CD4-positive, alpha-beta memory T cell (primary cell): ENCODE measurements at regions of chr10 and their contacts with region 1.

Region 1: DNA sequence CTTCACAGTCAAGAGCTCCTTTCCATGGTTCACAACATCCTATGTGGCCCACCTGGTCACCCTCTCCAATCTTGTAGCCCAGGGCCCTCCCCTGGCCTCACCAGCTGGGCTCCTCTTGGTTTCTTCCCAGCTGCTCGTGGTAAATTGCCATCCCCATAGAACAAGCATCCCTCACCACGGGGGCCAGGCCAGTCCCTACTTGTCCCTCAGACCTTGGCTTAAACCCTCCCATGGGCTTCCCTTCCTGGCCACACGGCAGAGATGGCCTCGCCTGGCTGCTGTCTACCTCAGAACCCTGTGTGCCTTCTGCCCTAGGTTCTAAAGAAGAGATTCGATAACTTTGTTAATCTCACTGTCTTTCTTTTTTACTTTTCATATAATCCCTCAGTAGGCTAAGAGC is 153.3 kb upstream of the TCERG1L start:
- DNase-seq: no peak
- H3K4me3 ChIP-seq: no peak overlapping the region
- H3K4me3 Mint-ChIP-seq: no peak overlapping the region
- H3K27ac ChIP-seq: no peak overlapping the region
- H3K27ac Mint-ChIP-seq: no peak overlapping the region
- H3K4me1 ChIP-seq: no peaks in the 10 kb centered on the region
- H3K4me1 Mint-ChIP-seq: no peaks in the 10 kb centered on the region
- H3K27me3 ChIP-seq: no peaks in the 10 kb centered on the region
- H3K27me3 Mint-ChIP-seq: peaks cover 0 to 9% of the 10 kb centered on the region in 2 donors

Region 2: DNA sequence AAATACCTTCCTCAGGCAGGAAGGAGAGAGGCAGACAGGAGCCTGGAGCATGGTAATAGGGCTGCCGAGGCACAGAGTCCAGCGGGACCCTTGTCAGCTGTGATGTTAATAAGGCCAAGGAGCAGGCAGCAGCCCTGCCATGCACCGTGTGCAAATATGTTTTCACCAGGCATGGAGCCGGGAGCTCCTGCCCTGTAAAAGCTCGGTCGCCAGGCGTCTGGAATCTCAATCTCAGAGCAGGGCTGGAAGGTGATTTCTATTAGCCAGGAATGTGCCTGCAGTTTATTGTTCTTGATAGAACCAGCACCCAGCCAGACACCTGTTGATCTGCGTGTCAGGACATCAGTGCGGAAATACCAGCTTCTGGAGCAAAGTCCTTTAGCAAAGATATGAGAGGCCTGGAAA is 858.8 kb before region 1 on chr10:
- CTCF ChIA-PET with region 1: no interaction called
- POLR2A ChIA-PET with region 1: no interaction called
- intact Hi-C with region 1: no loop called
- DNase-seq: no peak
- H3K4me3 ChIP-seq: no peak overlapping the region
- H3K4me3 Mint-ChIP-seq: no peak overlapping the region
- H3K27ac ChIP-seq: no peak overlapping the region
- H3K27ac Mint-ChIP-seq: no peak overlapping the region
- H3K4me1 ChIP-seq: no peaks in the 10 kb centered on the region
- H3K4me1 Mint-ChIP-seq: no peaks in the 10 kb centered on the region
- H3K27me3 ChIP-seq: no peaks in the 10 kb centered on the region
- H3K27me3 Mint-ChIP-seq: no peaks in the 10 kb centered on the region

Region 3: GRCh38 chr10:131402771-131403650 is 61.8 kb before region 1 on chr10:
- CTCF ChIA-PET with region 1: no interaction called
- POLR2A ChIA-PET with region 1: no interaction called
- intact Hi-C with region 1: no loop called
- DNase-seq: no peak
- H3K4me3 ChIP-seq: no peak overlapping the region
- H3K4me3 Mint-ChIP-seq: no peak overlapping the region
- H3K27ac ChIP-seq: no peak overlapping the region
- H3K27ac Mint-ChIP-seq: no peak overlapping the region
- H3K4me1 ChIP-seq: no peaks in the 10 kb centered on the region
- H3K4me1 Mint-ChIP-seq: no peaks in the 10 kb centered on the region
- H3K27me3 ChIP-seq: no peaks in the 10 kb centered on the region
- H3K27me3 Mint-ChIP-seq: no peaks in the 10 kb centered on the region

Region 4: DNA sequence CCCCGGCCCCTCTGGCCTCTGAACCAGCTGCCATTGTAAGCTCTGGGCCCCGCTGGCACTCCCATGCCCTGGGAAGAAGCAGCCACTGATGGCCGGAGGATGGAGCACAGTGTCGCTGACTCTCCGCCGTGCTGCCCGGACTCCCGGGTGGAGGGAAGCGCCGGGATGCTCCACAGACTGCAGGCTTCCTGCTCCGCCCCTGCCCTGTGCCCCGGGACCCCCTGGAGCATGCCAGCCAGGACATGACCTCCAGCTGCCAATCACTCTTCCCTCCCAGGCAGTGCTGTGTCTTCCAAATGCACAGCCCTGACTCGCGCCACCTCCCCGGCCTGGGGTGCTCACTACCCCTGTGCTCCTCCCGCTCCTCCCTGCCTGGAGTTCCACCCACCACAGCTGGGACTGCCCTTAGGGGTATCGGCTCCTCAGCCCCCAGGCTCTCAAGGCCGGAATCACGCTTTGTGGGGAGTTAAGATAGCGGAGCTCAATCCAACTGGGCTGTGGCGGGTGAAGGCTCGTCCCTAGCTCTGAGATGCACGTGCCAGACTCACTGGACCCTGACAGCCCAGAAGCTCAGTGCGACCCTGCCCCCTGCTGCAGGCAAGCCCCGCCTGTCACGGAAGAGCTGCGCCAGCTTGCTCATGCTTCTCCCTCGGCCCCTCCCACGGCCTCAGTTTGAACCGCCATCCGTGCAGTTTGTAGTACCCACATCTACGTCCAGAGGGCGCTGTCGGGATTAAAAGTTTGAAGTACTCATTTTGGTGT is 11.0 kb before region 1 on chr10:
- CTCF ChIA-PET with region 1: interaction called, 12 read pairs
- POLR2A ChIA-PET with region 1: no interaction called
- intact Hi-C with region 1: no loop called
- DNase-seq: peak in 4 of 5 donors; percentile 18 to 30 (median 25)
- H3K4me3 ChIP-seq: no peak overlapping the region
- H3K4me3 Mint-ChIP-seq: peak overlapping the region in 5 of 8 donors; percentile 20 to 70 (median 55)
- H3K27ac ChIP-seq: no peak overlapping the region
- H3K27ac Mint-ChIP-seq: peak overlapping the region in 1 of 7 donors; percentile 48
- H3K4me1 ChIP-seq: no peaks in the 10 kb centered on the region
- H3K4me1 Mint-ChIP-seq: peaks cover 0 to 6% (median 3%) of the 10 kb centered on the region in 4 donors
- H3K27me3 ChIP-seq: no peaks in the 10 kb centered on the region
- H3K27me3 Mint-ChIP-seq: peaks cover 11 to 14% of the 10 kb centered on the region in 2 donors